Adrenal gland (tissue), 19 donors: ENCODE measurements at regions of chr2 and their contacts with region 1.

Region 1: DNA sequence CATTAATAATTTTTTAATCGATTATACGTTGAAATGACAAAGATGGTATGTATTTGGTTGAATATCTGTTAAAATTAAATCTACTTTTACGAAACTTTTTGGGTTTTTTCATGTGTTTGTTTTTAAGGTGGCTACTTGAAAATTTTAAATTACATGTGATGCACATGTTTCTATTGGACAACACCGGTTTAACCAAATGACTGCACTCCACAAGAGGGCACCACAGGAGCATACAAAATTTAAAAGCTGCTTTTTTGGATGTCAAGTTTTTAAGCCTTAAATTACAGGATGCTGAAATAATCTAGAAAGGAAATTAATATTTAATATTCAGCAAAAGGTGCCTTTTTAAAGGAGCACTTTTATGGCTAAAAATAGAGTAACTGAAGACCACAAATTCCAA is 98.7 kb downstream of the ACVR1 start:
- DNase-seq: peak; percentile 41 to 87 (median 56)
- H3K4me3 ChIP-seq: no peak overlapping the region
- H3K27ac ChIP-seq: no peak overlapping the region
- H3K4me1 ChIP-seq: peaks cover 0 to 4% of the 10 kb centered on the region in 2 donors
- H3K27me3 ChIP-seq: no peaks in the 10 kb centered on the region
- CTCF ChIP-seq: peak; percentile 39 to 82 (median 72)
- POLR2A ChIP-seq: no peak

Region 2: DNA sequence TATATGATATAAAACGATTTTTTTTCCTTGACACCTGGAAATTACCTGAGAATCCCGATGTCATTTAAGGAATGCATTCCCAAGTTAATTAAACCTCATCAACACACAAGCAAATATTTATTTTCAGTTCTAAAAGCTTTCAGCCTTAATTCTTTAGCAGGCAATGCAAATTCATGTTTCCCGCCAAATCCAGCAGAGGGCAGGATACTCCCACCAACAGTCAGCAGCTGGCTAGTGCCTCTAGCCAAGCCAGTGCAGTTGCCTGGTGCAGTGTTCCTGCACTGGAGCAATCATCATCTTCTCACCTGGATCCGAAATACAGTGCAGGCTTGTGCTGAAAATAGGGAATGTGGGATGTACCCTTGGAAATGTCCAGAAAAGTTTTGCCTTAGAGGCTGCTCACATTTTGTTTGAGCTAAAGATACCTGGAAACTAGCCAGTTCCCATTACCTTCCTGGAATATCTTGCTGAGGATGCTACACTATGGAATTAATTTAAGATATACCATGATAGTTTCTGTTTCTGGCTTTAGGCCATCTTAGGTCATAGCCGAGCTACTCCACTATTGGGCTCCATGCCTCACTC is 285.1 kb before region 1 on chr2:
- intact Hi-C with region 1: loop called in 1 of 2 experiments (anchors 10 kb)
- DNase-seq: peak; percentile 44 to 85 (median 63)
- H3K4me3 ChIP-seq: no peak overlapping the region
- H3K27ac ChIP-seq: no peak overlapping the region
- H3K4me1 ChIP-seq: no peaks in the 10 kb centered on the region
- H3K27me3 ChIP-seq: peaks cover 4% of the 10 kb centered on the region
- CTCF ChIP-seq: peak; percentile 42 to 66 (median 56)
- POLR2A ChIP-seq: no peak